ENCODE measurements at regions of chr7 and their contacts with region 1.

Region 1: GRCh38 chr7:128398016-128398840 is 11.6 kb downstream of the IMPDH1 start:
- DNase-seq: peak; percentile 49 to 75
- ATAC-seq: peak; percentile 72 to 87 (median 80)
- H3K4me3 ChIP-seq: no peak overlapping the region
- H3K27ac ChIP-seq: no peak overlapping the region
- H3K4me1 ChIP-seq: no peaks in the 10 kb centered on the region
- H3K27me3 ChIP-seq: no peaks in the 10 kb centered on the region
- CTCF ChIP-seq: peak; percentile 90

Region 2: DNA sequence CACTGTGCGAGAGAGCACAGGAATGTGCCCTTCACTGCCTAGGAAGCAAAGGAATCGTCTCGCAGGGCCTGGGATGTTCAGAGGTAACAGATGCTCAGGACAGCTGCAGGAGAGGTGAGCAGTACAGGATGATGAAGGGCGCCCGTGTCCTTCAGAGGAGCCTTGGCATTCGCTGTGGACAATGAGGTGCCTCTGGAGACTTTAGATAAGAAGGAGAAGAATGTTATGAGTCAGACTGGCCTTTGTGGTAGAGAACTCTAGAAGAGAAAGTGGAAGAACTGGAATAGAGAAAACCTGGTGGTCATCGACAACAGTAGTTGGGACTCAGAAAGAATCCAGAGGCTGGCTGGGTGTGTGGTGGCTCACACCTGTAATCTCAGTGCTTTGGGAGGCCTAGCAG is 221.5 kb before region 1 on chr7:
- intact Hi-C with region 1: no loop called
- DNase-seq: no peak
- ATAC-seq: no peak
- H3K4me3 ChIP-seq: no peak overlapping the region
- H3K27ac ChIP-seq: no peak overlapping the region
- H3K4me1 ChIP-seq: no peaks in the 10 kb centered on the region
- H3K27me3 ChIP-seq: peaks cover 0 to 24% (median 3%) of the 10 kb centered on the region in 3 donors
- CTCF ChIP-seq: no peak

Region 3: DNA sequence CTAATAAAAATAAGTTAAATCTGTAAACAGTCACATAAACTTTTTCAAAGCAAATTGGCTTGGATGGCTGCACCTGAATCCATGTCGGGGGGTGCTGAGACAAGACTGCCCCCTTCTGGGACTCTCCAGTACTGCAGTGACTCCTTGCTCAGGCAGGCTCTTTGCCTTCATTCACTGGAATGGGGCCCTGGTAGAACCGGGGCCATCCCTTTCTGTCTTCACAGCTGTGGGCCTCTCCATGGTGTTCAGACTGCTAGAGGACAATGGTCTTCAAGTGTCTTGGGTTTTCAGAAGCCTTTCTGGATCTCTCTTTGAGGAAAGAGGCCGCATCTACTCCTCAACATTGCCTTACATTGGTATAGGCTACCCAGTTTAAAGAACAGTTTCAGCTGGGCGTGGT is 27.6 kb after region 1 on chr7:
- intact Hi-C with region 1: loop called in 1 of 2 experiments (anchors 1 kb)
- DNase-seq: peak; percentile 58 to 69
- ATAC-seq: peak; percentile 63 to 74 (median 70)
- H3K4me3 ChIP-seq: no peak overlapping the region
- H3K27ac ChIP-seq: no peak overlapping the region
- H3K4me1 ChIP-seq: no peaks in the 10 kb centered on the region
- H3K27me3 ChIP-seq: peaks cover 0 to 6% (median 0%) of the 10 kb centered on the region in 3 donors
- CTCF ChIP-seq: peak; percentile 82